Heart right ventricle (tissue), 16 donors: ENCODE measurements at regions of chr1 and their contacts with region 1.

Region 1: GRCh38 chr1:192974701-192975100 is 84.5 kb downstream of the UCHL5 start:
- DNase-seq: no peak
- ATAC-seq: no peak
- H3K4me3 ChIP-seq: no peak overlapping the region
- H3K27ac ChIP-seq: no peak overlapping the region
- H3K4me1 ChIP-seq: no peaks in the 10 kb centered on the region
- H3K27me3 ChIP-seq: no peaks in the 10 kb centered on the region
- CTCF ChIP-seq: no peak

Region 2: DNA sequence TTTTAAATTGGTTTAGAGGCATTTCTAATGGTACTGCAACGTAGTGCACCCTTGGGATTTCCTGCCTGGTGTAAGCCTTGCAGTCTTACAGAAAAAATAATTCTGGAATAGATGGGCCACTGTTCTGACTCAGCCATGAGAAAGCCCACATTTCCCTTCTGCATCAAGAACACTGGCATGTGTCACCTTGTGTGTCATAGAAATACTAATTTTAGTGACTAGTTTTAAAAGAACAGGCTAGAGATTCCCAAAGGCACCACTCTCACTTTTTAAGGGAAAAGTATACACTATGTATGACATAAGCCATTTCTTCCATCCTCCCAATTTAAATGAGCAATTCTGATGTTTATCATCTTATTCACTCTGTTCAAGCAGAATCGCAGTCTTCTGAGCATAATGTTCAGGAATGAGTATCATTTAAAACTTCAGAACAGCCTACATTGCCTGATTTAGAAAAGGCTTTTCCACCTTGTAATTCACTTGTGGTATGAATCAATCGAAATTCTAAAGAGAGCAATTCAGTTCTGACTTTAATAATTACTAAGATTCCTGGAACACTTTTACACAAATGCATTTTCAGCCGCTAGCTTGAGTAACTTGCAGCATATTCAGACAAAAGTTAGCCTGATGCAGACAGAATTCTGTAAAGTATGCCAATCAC is 320.0 kb before region 1 on chr1:
- intact Hi-C with region 1: no loop called
- DNase-seq: no peak
- ATAC-seq: no peak
- H3K4me3 ChIP-seq: no peak overlapping the region
- H3K27ac ChIP-seq: no peak overlapping the region
- H3K4me1 ChIP-seq: no peaks in the 10 kb centered on the region
- H3K27me3 ChIP-seq: no peaks in the 10 kb centered on the region
- CTCF ChIP-seq: no peak

Region 3: DNA sequence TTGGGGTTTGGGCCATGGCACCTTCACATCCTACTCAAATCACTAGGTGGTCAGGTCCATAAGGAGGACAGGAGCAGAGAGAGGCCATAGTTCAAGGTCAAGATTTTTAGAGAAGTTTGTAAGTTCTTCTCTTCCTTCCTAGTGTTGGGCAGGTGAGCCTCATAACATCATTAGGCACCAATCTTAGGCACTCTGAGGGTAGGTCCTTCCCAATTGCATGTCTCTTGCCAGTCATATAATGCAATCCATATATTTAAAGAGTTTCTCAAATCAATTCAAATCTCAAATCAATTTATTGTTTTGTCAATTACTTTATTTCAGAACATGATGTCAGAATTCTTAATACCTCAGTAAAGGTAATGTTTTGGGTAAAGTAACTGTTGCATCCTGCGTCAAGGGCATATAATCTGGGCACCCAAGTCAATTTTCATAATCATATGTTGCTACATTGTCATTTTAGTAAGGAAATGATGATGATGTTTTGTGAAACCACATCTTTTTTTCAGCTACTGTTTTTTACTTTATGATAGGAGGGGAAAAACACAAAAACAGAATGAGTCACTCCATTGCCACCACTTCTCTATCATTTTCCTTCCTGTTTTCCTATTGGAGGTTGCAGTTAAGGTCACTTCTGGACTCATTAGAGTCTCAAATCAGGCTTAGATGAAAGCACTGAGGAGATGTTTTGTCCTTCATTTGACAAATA is 38.2 kb before region 1 on chr1:
- intact Hi-C with region 1: no loop called
- DNase-seq: no peak
- ATAC-seq: peak in 3 of 8 donors; percentile 37 to 59 (median 41)
- H3K4me3 ChIP-seq: no peak overlapping the region
- H3K27ac ChIP-seq: peak overlapping the region in 2 of 10 donors; percentile 53 to 77
- H3K4me1 ChIP-seq: peaks cover 0 to 33% (median 0%) of the 10 kb centered on the region in 9 donors
- H3K27me3 ChIP-seq: no peaks in the 10 kb centered on the region
- CTCF ChIP-seq: no peak

Region 4: DNA sequence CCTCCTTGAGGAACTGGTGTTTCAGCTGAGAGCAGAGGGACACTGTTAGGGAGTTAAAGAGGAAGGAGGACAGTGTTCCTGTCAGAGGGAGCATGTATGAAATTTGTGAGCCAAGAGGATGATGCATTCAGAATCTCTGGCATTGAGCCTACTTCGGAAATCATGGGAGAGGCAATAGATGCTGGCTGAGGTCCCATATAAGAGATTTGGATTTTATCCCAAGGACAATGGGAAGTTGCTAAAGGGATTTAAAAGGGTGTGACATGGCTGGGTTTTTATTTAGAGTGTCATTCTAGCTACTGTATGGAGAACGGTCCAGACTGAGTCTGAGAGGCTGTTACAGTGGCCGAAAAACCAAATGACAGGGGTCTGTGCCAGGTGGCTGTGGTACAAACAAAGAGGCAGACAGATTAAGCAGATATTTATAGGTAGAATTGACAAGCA is 614.9 kb after region 1 on chr1:
- intact Hi-C with region 1: loop called in 1 of 10 experiments (anchors 5 kb)
- DNase-seq: peak; percentile 11 to 16
- ATAC-seq: peak; percentile 52 to 86 (median 78)
- H3K4me3 ChIP-seq: peak overlapping the region in 1 of 10 donors; percentile 10
- H3K27ac ChIP-seq: peak overlapping the region in 9 of 10 donors; percentile 8 to 74 (median 62)
- H3K4me1 ChIP-seq: peaks cover 0 to 48% (median 11%) of the 10 kb centered on the region in 9 donors
- H3K27me3 ChIP-seq: no peaks in the 10 kb centered on the region
- CTCF ChIP-seq: no peak

Region 5: GRCh38 chr1:193799948-193800690 is 825.4 kb after region 1 on chr1:
- intact Hi-C with region 1: no loop called
- DNase-seq: no peak
- ATAC-seq: no peak
- H3K4me3 ChIP-seq: no peak overlapping the region
- H3K27ac ChIP-seq: no peak overlapping the region
- H3K4me1 ChIP-seq: no peaks in the 10 kb centered on the region
- H3K27me3 ChIP-seq: no peaks in the 10 kb centered on the region
- CTCF ChIP-seq: no peak